OCI-LY7 (cell line): ENCODE measurements at regions of chr9 and their contacts with region 1.

Region 1: DNA sequence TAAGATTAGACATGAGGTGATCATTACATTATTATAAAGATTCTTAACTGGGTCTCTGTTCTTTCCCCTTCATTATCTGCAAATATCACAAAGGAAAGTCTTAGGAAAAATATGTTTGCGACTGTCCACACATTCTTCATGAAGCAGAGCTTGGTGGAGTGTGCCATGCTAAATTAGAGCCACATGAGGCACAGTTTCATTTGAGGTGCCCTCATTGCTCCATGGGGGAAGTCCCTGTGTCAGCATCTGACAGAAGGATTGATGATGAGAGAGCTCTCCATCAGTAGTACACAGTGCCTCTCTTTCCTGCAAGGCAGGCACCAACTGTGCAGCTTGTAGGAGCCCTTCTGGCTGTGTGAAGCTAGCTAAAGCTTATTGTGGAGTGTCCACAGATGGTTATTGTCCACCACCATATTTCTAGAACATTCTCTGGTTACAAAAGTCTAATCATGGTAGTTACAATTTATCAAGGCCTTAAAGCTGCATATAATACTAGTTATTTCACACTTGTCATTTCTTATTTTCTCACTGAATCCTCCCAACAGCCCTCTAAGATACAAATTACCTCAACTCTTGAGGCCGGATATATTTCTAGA is 63.9 kb downstream of the C9orf152 start:
- DNase-seq: peak; percentile 87
- H3K4me3 ChIP-seq: peak overlapping the region; percentile 50
- H3K27ac ChIP-seq: peak overlapping the region; percentile 97
- H3K4me1 ChIP-seq: peaks cover 83% of the 10 kb centered on the region
- CTCF ChIP-seq: peak; percentile 54; the same call in 1 of the 2 replicates

Region 2: DNA sequence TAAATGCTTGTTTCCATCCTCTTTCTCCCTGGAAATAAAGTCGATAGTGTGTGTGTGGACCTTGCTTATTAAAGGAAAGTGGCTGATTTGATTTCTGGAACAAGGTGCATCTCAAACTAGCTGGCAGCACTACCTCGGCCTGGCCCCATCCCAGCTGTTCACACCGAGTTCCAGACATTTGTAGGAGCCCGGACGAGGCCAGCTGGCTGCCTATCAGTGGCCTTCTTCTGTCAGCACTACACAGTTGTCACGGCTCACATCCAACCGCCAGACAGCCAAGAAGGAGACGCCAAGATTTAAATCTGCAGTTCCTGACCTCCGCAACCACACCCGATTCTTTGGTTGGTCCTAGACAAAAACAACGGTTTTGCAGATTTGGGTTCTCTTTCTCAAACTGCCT is 300.4 kb before region 1 on chr9:
- CTCF ChIA-PET with region 1: no interaction called
- POLR2A ChIA-PET with region 1: no interaction called
- intact Hi-C with region 1: no loop called
- DNase-seq: no peak
- H3K4me3 ChIP-seq: no peak overlapping the region
- H3K27ac ChIP-seq: no peak overlapping the region
- H3K4me1 ChIP-seq: no peaks in the 10 kb centered on the region
- CTCF ChIP-seq: no peak

Region 3: GRCh38 chr9:109910671-109911518 is 233.2 kb before region 1 on chr9:
- CTCF ChIA-PET with region 1: interaction called, 9 read pairs
- POLR2A ChIA-PET with region 1: interaction called, 215 read pairs
- intact Hi-C with region 1: loop called (anchors 1 kb)
- DNase-seq: no peak
- H3K4me3 ChIP-seq: no peak overlapping the region
- H3K27ac ChIP-seq: peak overlapping the region; percentile 98
- H3K4me1 ChIP-seq: peaks cover 100% of the 10 kb centered on the region
- CTCF ChIP-seq: no peak

Region 4: DNA sequence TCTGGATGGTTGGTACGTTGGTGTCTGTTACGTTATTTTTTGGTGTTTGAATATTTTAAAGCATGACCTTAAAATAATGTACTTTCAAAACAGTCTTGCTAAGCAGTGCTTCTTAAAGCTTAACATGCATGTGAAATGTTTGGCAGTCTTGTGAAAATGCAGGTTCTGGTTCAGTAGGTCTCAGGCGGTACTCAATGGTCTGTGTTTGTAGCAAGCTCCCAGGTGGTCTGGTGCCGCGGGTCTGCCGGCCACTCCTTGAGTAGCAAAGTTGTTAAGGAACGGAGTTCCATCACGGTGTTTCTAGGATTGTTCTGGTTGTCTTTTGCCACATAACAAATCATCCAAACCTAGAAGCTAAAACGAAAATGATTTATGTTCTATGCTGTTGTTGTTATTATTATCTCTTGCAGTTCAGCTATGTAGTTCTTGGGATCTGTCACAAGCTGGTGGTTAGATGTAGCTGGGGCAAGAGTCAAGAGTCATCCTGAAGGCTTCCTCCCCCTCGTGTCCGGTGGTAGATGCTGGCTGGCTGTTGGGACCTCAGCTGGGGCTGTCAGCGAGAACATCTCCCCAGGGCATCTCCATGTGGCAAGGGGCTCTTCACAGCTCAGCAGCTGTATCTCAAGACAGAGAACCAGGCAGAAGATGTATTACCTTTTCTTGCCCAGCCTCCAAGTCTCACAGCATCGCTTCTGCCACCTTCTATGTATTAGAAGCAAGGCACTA is 177.2 kb before region 1 on chr9:
- CTCF ChIA-PET with region 1: interaction called, 11 read pairs
- POLR2A ChIA-PET with region 1: interaction called, 75 read pairs
- intact Hi-C with region 1: loop called (anchors 1 kb)
- DNase-seq: peak; percentile 91
- H3K4me3 ChIP-seq: peak overlapping the region; percentile 35
- H3K27ac ChIP-seq: peak overlapping the region; percentile 98
- H3K4me1 ChIP-seq: peaks cover 95% of the 10 kb centered on the region
- CTCF ChIP-seq: peak; percentile 36; the same call in 1 of the 2 replicates

Region 5: DNA sequence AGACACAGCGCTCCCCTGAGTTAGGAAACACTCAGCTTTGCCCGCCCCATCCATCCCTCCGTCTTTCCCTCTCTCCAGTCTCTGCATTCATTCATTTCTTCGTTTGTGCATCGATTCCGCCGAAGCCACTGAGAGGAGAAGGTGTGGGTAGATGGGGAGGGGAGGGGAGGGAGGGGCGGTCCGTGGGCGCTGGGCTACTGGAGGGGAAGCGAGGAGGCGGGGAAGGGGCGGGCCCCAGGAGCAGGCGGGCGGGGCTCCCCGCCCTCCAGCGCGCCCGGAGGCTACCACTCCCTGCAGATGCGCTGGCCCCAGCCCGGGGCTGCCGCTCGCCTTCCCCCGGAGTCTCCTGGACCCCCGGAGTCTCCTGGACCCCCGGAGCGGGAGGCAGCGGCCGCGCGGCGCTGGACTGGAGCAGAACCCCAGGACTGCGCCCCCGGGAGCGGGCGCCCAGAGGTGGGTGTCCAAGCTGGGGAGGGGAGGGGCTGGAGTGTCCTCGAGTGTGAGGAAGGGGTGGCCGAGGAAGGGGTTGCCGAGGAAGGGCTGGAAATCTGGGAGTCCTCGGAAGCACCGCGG is 95.6 kb before region 1 on chr9:
- CTCF ChIA-PET with region 1: interaction called, 3 read pairs
- POLR2A ChIA-PET with region 1: interaction called, 21 read pairs
- intact Hi-C with region 1: loop called (anchors 1 kb)
- DNase-seq: peak; percentile 88
- H3K4me3 ChIP-seq: peak overlapping the region; percentile 86
- H3K27ac ChIP-seq: peak overlapping the region; percentile 53
- H3K4me1 ChIP-seq: peaks cover 47% of the 10 kb centered on the region
- CTCF ChIP-seq: no peak

Region 6: GRCh38 chr9:110099236-110100095 is 44.6 kb before region 1 on chr9:
- CTCF ChIA-PET with region 1: interaction called, 13 read pairs
- POLR2A ChIA-PET with region 1: interaction called, 41 read pairs
- intact Hi-C with region 1: loop called (anchors 2 kb)
- DNase-seq: peak; percentile 47
- H3K4me3 ChIP-seq: peak overlapping the region; percentile 4
- H3K27ac ChIP-seq: peak overlapping the region; percentile 79
- H3K4me1 ChIP-seq: peaks cover 67% of the 10 kb centered on the region
- CTCF ChIP-seq: peak; percentile 47

Region 7: DNA sequence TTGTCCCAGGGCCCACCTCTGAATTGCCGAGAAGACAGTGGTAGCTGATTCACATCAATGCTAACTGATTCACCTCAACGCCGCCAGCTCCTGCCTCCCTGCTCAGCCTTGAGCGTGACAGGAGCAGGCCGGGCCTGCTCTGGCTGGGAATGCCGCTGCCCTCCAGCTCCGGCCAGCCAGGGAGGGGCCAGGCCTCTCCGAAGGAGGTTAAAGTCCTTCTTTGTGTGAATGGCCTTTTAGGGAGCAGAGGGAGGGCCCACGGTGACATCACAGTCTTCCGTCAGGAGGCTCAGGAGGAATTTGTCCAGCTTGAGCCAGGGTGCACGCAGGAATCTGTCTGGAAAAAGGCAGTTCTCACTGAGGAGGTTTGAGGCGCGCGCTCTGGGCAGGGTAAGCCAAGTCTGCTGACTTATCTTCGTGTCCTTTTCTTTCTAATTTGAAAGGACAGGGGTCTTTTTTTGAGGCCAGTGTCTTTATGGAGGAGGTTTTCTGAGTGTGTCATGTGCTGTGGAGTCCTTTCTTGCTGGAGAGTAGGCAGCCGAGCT is 18.8 kb before region 1 on chr9:
- CTCF ChIA-PET with region 1: interaction called, 37 read pairs
- POLR2A ChIA-PET with region 1: interaction called, 133 read pairs
- intact Hi-C with region 1: loop called (anchors 1 kb)
- DNase-seq: no peak
- H3K4me3 ChIP-seq: peak overlapping the region; percentile 57
- H3K27ac ChIP-seq: peak overlapping the region; percentile 95
- H3K4me1 ChIP-seq: peaks cover 100% of the 10 kb centered on the region
- CTCF ChIP-seq: no peak

Region 8: DNA sequence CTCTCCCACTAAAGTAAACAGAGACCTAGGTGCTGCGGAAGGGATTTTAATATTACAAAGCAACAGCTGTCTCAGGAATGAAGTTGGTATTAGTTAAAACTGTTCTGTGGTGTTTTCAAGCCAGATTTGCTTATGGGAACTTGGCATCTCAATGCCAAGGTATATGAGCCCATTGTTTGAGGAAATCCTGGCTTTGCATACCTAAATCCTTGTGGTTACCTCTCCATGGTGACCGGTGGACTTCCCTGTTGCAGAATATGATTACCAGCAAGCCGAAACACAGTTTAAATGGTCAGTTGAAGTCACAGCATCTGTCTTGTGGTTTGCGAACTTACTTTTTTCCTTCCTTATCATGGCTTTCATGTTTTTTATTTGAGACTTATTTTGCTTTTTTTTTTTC is 255.9 kb after region 1 on chr9:
- CTCF ChIA-PET with region 1: no interaction called
- POLR2A ChIA-PET with region 1: no interaction called
- intact Hi-C with region 1: no loop called
- DNase-seq: no peak
- H3K4me3 ChIP-seq: no peak overlapping the region
- H3K27ac ChIP-seq: no peak overlapping the region
- H3K4me1 ChIP-seq: no peaks in the 10 kb centered on the region
- CTCF ChIP-seq: no peak